ENCODE measurements at regions of chr18 and their contacts with region 1.

Region 1: DNA sequence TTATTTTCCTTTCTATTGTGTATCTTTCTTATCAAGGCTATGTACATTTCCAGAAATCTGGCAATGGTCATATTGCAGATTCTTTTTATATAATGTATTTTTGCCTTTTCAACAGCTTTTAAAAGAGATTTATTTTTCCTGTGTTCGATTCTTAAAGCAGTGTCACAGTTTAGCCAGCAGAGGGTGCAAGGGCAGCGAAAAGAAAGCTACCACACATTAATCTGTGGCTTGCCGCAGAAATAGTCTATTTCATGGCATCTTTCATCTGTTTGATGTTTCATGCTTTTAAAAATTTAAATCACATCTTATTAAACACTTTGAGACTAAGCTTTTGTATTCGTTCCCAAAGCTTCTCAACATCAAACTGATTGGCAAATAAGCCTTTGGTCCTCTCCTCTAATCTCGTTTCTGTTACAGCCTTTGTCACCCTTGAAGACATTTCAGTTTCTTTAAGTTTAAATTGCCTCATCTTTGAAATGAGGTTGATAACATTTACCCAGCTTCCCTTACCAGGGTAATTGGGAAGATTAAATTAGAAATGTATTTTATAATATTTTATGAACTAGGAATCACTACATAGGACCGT is 73.3 kb downstream of the PIK3C3 start:
- DNase-seq: no peak
- H3K4me3 ChIP-seq: no peak overlapping the region
- H3K27me3 ChIP-seq: no peaks in the 10 kb centered on the region
- CTCF ChIP-seq: peak; percentile 90

Region 2: GRCh38 chr18:42011053-42011452 is 17.3 kb before region 1 on chr18:
- CTCF ChIA-PET with region 1: interaction called, 41 read pairs
- POLR2A ChIA-PET with region 1: no interaction called
- DNase-seq: no peak
- H3K4me3 ChIP-seq: no peak overlapping the region
- H3K27me3 ChIP-seq: no peaks in the 10 kb centered on the region
- CTCF ChIP-seq: no peak

Region 3: DNA sequence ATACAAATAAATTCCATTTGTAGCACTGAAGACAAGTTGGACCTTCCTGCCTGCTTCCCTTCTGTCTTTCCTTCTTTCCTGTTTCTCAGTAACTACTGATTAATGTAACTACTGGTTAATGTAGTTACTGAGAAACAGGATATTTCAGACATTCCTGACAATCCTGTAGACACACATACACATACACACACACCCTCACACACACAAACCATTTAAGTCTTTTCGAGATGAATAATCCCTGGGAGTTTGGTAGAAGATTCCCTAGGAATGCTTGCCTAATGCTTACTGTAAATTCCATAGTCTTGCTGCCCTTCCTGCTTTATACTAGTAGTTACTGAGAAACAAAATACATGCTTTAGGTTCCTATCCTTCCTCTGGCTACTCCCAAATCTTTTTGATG is 10.6 kb after region 1 on chr18:
- CTCF ChIA-PET with region 1: interaction called, 13 read pairs
- POLR2A ChIA-PET with region 1: no interaction called
- DNase-seq: peak; percentile 89
- H3K4me3 ChIP-seq: no peak overlapping the region
- H3K27me3 ChIP-seq: no peaks in the 10 kb centered on the region
- CTCF ChIP-seq: no peak